ENCODE measurements at regions of chr15 and their contacts with region 1.

Region 1: GRCh38 chr15:92077353-92078085 is 224.0 kb downstream of the SLCO3A1 start:
- DNase-seq: peak; percentile 64 to 68
- H3K4me3 ChIP-seq: no peak overlapping the region
- H3K4me3 Mint-ChIP-seq: no peak overlapping the region
- H3K27ac Mint-ChIP-seq: no peak overlapping the region
- H3K4me1 ChIP-seq: no peaks in the 10 kb centered on the region
- H3K4me1 Mint-ChIP-seq: no peaks in the 10 kb centered on the region
- H3K27me3 ChIP-seq: no peaks in the 10 kb centered on the region
- H3K27me3 Mint-ChIP-seq: peaks cover 11% of the 10 kb centered on the region
- CTCF ChIP-seq: peak; percentile 39 to 64

Region 2: GRCh38 chr15:91706322-91707032 is 371.0 kb before region 1 on chr15:
- CTCF ChIA-PET with region 1: no interaction called
- POLR2A ChIA-PET with region 1: no interaction called
- intact Hi-C with region 1: loop called (anchors 2 kb)
- DNase-seq: peak; percentile 53 to 63
- H3K4me3 ChIP-seq: no peak overlapping the region
- H3K4me3 Mint-ChIP-seq: no peak overlapping the region
- H3K27ac Mint-ChIP-seq: no peak overlapping the region
- H3K4me1 ChIP-seq: no peaks in the 10 kb centered on the region
- H3K4me1 Mint-ChIP-seq: no peaks in the 10 kb centered on the region
- H3K27me3 ChIP-seq: no peaks in the 10 kb centered on the region
- H3K27me3 Mint-ChIP-seq: no peaks in the 10 kb centered on the region
- CTCF ChIP-seq: peak; percentile 76 to 81

Region 3: GRCh38 chr15:91852741-91853510 is 224.6 kb before region 1 on chr15:
- CTCF ChIA-PET with region 1: no interaction called
- POLR2A ChIA-PET with region 1: no interaction called
- intact Hi-C with region 1: loop called (anchors 2 kb)
- DNase-seq: peak; percentile 39 to 46
- H3K4me3 ChIP-seq: peak overlapping the region; percentile 27
- H3K4me3 Mint-ChIP-seq: peak overlapping the region; percentile 57
- H3K27ac Mint-ChIP-seq: no peak overlapping the region
- H3K4me1 ChIP-seq: no peaks in the 10 kb centered on the region
- H3K4me1 Mint-ChIP-seq: no peaks in the 10 kb centered on the region
- H3K27me3 ChIP-seq: no peaks in the 10 kb centered on the region; the same call in 1 of the 2 replicates
- H3K27me3 Mint-ChIP-seq: peaks cover 18% of the 10 kb centered on the region
- CTCF ChIP-seq: peak; percentile 52 to 67

Region 4: GRCh38 chr15:91885714-91886270 is 191.7 kb before region 1 on chr15:
- CTCF ChIA-PET with region 1: no interaction called
- POLR2A ChIA-PET with region 1: no interaction called
- intact Hi-C with region 1: loop called (anchors 1 kb)
- DNase-seq: no peak
- H3K4me3 ChIP-seq: no peak overlapping the region
- H3K4me3 Mint-ChIP-seq: no peak overlapping the region
- H3K27ac Mint-ChIP-seq: no peak overlapping the region
- H3K4me1 ChIP-seq: no peaks in the 10 kb centered on the region
- H3K4me1 Mint-ChIP-seq: no peaks in the 10 kb centered on the region
- H3K27me3 ChIP-seq: peaks cover 1% of the 10 kb centered on the region; the same call in 1 of the 2 replicates
- H3K27me3 Mint-ChIP-seq: no peaks in the 10 kb centered on the region
- CTCF ChIP-seq: peak in 1 of 2 experiments; percentile 35